Gastrocnemius medialis (tissue), 4 donors: ENCODE measurements at regions of chr18 and their contacts with region 1.

Region 1: DNA sequence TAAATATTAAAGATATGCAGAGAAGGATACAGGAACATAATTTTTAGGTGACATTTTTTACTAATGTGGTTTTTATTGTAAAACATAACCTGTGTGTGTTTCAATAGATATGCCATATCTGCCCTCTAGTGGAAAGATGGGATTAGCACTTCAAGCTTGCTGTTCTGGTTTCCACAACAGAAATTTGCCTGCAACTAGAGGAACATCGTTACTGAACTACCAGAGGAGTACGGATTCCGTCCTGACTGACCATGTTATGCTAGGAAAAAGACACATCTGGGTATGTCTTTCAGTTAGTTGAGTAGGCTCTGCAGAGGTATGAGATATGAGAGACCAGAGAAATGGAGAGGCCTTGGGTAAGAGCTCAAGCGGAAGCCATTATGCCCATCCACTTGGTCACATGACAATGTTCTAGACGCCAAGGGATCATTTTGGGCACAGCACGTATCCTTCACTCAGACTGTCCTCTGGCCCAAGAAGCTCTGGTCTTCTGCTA is 104.9 kb downstream of the MBD2 start:
- DNase-seq: no peak
- ATAC-seq: peak in 1 of 2 donors; percentile 49
- H3K4me3 ChIP-seq: peak overlapping the region in 1 of 4 donors; percentile 21
- H3K27ac ChIP-seq: no peak overlapping the region
- H3K4me1 ChIP-seq: no peaks in the 10 kb centered on the region
- H3K27me3 ChIP-seq: no peaks in the 10 kb centered on the region
- CTCF ChIP-seq: peak in 4 of 5 experiments; percentile 17 to 68 (median 54)
- POLR2A ChIP-seq: no peak

Region 2: DNA sequence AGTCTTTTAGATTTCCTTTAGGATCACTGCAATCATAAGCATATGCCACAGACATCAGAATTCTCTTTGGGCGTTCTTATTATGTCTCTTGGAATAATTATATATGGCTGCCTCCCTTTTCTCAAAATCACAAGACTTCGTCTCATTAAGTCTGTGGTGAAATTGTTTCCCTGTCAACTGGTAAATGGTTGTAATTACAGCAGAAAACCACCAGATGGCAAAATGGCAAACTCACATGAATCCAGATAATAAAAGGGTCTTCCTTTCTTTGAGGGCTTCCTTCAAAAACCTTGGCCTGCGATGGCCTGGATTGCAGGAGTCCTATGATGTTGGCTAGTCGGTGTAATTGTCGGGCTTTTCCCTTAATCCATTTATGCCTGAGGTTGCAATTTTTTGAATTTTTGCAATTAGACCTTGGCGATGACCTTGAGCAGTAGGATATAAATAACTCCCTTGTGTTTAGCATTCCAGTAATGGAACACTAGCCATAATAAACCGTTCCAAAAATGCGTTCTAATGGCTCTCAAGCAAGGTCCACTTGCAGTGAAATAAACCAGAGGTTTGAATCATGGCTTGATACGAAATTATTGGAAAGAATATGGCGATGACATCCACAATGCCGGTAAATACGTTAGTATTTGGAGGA is 551.5 kb before region 1 on chr18:
- in situ Hi-C with region 1: loop called in 2 of 4 experiments (anchors 10 to 25 kb)
- intact Hi-C with region 1: no loop called
- DNase-seq: no peak
- ATAC-seq: no peak
- H3K4me3 ChIP-seq: no peak overlapping the region
- H3K27ac ChIP-seq: no peak overlapping the region
- H3K4me1 ChIP-seq: no peaks in the 10 kb centered on the region
- H3K27me3 ChIP-seq: no peaks in the 10 kb centered on the region
- CTCF ChIP-seq: peak in 2 of 5 experiments; percentile 28 to 37
- POLR2A ChIP-seq: no peak

Region 3: DNA sequence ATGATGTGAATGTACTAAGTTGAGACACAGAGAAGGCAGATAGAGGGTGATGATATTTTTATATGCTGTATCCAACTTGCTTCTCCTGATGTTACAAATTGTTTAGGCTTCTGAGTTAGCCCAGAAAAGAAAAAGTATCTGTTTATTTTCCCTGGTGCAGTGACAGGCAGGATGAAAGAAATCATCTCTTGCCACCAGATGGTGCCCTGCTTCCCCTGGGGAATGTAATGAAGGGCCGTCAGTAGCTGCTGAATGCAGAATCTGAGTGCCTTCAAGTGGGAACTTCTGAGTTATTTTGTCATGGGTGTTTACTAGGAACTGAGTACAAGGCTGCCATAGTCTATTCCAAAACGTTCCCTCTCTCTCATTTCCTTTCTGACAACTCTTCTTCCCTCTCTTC is 420.7 kb before region 1 on chr18:
- in situ Hi-C with region 1: loop called in 1 of 4 experiments (anchors 10 kb)
- intact Hi-C with region 1: no loop called
- DNase-seq: no peak
- ATAC-seq: no peak
- H3K4me3 ChIP-seq: no peak overlapping the region
- H3K27ac ChIP-seq: no peak overlapping the region
- H3K4me1 ChIP-seq: no peaks in the 10 kb centered on the region
- H3K27me3 ChIP-seq: no peaks in the 10 kb centered on the region
- CTCF ChIP-seq: peak in 2 of 5 experiments; percentile 19 to 22
- POLR2A ChIP-seq: no peak